H1 (cell line): ENCODE measurements at regions of chr20 and their contacts with region 1.

Region 1: DNA sequence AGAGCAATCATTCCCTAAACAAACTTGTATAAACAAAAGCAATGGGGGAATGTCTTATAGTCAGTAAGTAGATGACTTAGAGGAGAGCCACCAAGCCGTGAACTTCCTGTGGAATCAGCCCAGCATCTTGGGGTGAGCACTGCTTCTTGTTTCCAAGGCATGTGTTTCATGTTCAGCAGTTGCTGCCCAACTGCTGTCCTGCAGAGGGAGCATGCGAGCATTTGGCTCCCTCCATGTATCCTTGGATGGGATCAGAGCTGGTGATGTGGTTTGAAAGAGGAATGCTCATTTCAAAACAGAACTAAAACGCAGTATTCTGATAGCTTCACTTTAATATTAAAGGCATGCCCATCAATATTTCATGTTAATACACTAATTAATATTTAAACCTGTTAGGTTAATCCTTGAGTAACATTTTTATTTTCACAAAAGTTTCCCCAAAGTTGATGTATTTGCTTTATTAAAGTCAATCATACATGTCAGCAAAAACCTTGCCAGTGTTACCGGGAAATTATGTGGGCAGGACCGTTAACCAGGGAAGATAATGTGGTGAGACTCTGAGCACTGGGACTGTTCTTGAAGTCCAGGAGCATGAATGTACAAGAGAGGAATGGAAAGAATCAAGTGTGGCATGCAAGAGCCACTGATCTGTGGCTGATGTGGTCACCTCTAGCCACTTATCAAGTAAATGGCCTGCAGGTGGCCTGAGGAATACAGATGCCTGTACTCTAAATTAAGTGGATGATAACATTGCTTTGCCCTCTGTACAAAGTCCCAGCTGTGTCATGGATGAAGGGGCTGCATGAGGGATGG is 172.2 kb upstream of the GGTLC1 start:
- DNase-seq: peak in 1 of 2 experiments; percentile 65
- H3K4me3 ChIP-seq: no peak overlapping the region
- H3K27ac ChIP-seq: no peak overlapping the region
- H3K4me1 ChIP-seq: peaks cover 0 to 2% (median 0%) of the 10 kb centered on the region in 4 experiments; a peak in 1 of 7 replicates
- H3K27me3 ChIP-seq: peaks cover 0 to 1% (median 0%) of the 10 kb centered on the region in 4 experiments; a peak in 2 of 7 replicates
- CTCF ChIP-seq: peak; percentile 72 to 93 (median 86)
- EP300 ChIP-seq: no peak
- POLR2A ChIP-seq: no peak
- RAD21 ChIP-seq: peak; percentile 69 to 72

Region 2: GRCh38 chr20:24027229-24027628 is 133.5 kb before region 1 on chr20:
- CTCF ChIA-PET with region 1: no interaction called
- POLR2A ChIA-PET with region 1: no interaction called
- DNase-seq: no peak
- H3K4me3 ChIP-seq: no peak overlapping the region
- H3K27ac ChIP-seq: no peak overlapping the region
- H3K4me1 ChIP-seq: no peaks in the 10 kb centered on the region
- H3K27me3 ChIP-seq: no peaks in the 10 kb centered on the region
- CTCF ChIP-seq: no peak
- EP300 ChIP-seq: no peak
- POLR2A ChIP-seq: no peak
- RAD21 ChIP-seq: no peak

Region 3: GRCh38 chr20:24149881-24150307 is 10.9 kb before region 1 on chr20:
- CTCF ChIA-PET with region 1: interaction called, 89 read pairs
- POLR2A ChIA-PET with region 1: no interaction called
- DNase-seq: peak in 1 of 2 experiments; percentile 82
- H3K4me3 ChIP-seq: no peak overlapping the region
- H3K27ac ChIP-seq: no peak overlapping the region
- H3K4me1 ChIP-seq: no peaks in the 10 kb centered on the region
- H3K27me3 ChIP-seq: no peaks in the 10 kb centered on the region
- CTCF ChIP-seq: peak; percentile 56 to 77 (median 73)
- EP300 ChIP-seq: no peak
- POLR2A ChIP-seq: no peak
- RAD21 ChIP-seq: peak; percentile 47 to 57

Region 4: DNA sequence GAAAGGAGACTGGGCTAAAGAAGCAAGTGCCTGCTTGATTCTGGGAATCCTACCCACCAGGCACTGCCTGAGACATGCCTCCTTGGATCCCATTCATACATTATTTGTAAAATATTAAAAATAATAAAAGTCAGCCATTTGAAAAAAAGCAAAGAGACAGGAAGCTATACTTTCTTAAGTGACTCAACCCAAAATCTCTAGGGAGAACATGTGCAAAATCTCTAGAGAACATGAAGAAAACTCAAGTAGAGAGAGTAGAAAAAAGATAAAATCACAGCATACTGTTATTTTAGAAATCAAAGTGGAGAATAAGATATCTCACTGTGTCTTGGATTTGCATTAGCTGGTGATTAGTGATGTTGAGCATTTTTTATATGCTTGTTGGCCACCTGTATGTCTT is 25.0 kb after region 1 on chr20:
- CTCF ChIA-PET with region 1: interaction called, 18 read pairs
- POLR2A ChIA-PET with region 1: no interaction called
- DNase-seq: no peak
- H3K4me3 ChIP-seq: no peak overlapping the region
- H3K27ac ChIP-seq: no peak overlapping the region
- H3K4me1 ChIP-seq: no peaks in the 10 kb centered on the region; a peak in 2 of 7 replicates
- H3K27me3 ChIP-seq: no peaks in the 10 kb centered on the region
- CTCF ChIP-seq: no peak
- EP300 ChIP-seq: no peak
- POLR2A ChIP-seq: no peak
- RAD21 ChIP-seq: no peak

Region 5: DNA sequence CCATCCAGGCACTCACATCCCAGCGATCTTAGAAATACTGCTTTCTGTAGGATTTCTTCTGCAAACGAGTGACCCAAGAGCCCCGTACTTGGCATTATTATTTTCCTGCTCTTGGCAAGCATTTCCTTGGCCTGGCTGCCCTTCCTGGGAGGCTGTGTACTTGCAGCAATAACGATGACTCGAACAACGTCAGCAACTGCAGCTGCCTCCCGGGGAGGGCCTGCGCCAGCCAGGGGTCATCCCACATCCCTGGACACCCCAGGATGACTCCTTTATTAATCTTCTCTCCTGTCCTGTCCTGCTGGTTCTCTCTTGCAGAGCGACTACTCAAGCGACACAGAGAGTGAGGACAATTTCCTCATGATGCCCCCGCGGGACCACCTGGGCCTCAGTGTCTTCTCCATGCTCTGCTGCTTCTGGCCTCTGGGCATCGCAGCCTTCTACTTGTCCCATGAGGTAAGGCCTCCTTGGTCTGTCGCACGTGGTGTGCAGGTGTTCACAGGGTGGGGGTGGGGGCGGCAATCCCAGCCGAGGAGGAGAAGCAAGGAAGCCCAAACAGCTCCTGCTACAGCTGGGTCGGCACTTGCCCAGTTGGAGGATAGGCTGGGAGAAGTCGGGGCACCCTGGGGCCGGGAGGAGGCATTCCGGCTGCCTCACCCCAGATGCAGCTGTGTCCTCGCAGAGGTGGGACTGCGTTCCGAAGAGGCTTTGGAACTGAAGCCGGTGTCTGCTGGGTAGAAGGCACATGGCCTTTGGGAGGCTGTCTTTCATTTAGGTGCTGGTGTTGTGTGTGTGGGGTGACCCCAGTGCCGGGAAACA is 424.0 kb after region 1 on chr20:
- CTCF ChIA-PET with region 1: no interaction called
- POLR2A ChIA-PET with region 1: no interaction called
- DNase-seq: peak in 1 of 2 experiments; percentile 40
- H3K4me3 ChIP-seq: no peak overlapping the region
- H3K27ac ChIP-seq: no peak overlapping the region
- H3K4me1 ChIP-seq: peaks cover 0 to under 1% (median 0%) of the 10 kb centered on the region in 4 experiments; a peak in 3 of 7 replicates
- H3K27me3 ChIP-seq: no peaks in the 10 kb centered on the region
- CTCF ChIP-seq: no peak
- EP300 ChIP-seq: no peak
- POLR2A ChIP-seq: no peak
- RAD21 ChIP-seq: no peak

Region 6: DNA sequence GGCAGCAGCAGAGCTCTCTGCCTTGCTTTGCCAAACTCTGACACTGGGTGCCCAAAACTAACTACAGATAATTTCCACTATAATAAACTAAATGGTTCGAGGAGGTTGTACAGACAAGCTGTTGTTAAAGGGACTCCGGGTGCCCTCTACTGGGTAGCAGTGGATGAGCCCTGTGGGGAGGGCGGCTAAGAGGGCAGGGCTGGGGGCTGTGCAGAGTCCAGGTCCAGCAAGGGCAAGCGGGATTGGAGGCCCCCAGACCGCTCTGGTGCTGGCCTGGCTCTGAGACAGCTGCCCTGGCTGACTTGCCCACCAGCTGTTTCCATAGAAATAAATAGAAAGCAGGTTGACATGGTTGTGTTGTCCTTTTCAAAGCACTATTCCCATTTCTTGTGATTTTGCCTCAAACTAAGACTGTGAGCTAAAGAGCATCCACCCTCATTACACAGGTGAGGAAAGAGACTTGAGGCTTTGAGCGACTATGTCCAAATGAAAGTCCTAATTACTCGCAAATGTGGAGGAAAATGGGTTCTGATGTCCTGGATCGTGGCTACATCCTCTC is 620.7 kb after region 1 on chr20:
- CTCF ChIA-PET with region 1: interaction called, 11 read pairs
- POLR2A ChIA-PET with region 1: no interaction called
- DNase-seq: peak in 1 of 2 experiments; percentile 55
- H3K4me3 ChIP-seq: no peak overlapping the region
- H3K27ac ChIP-seq: no peak overlapping the region
- H3K4me1 ChIP-seq: no peaks in the 10 kb centered on the region
- H3K27me3 ChIP-seq: no peaks in the 10 kb centered on the region
- CTCF ChIP-seq: peak; percentile 53 to 58 (median 57)
- EP300 ChIP-seq: no peak
- POLR2A ChIP-seq: no peak
- RAD21 ChIP-seq: peak; percentile 70 to 82